ENCODE measurements at regions of chr21 and their contacts with region 1.

Region 1: GRCh38 chr21:15729674-15730483 is at the start of gene USP25:
- DNase-seq: peak; percentile 80
- H3K4me3 Mint-ChIP-seq: peak within 1 kb of the TSS; percentile 93
- H3K27ac Mint-ChIP-seq: peak within 1 kb of the TSS; percentile 91
- H3K4me1 Mint-ChIP-seq: peaks cover 40% of the 10 kb centered on the region
- H3K27me3 Mint-ChIP-seq: peaks cover 31% of the 10 kb centered on the region
- total RNA-seq, gene USP25: 25.6 and 26.8 TPM in 2 replicates

Region 2: GRCh38 chr21:14454016-14455009 is 1275.6 kb before region 1 on chr21:
- intact Hi-C with region 1: loop called (anchors 5 kb)
- DNase-seq: no peak
- H3K4me3 Mint-ChIP-seq: peak overlapping the region; percentile 62
- H3K27ac Mint-ChIP-seq: peak overlapping the region; percentile 92
- H3K4me1 Mint-ChIP-seq: peaks cover 74% of the 10 kb centered on the region
- H3K27me3 Mint-ChIP-seq: no peaks in the 10 kb centered on the region

Region 3: DNA sequence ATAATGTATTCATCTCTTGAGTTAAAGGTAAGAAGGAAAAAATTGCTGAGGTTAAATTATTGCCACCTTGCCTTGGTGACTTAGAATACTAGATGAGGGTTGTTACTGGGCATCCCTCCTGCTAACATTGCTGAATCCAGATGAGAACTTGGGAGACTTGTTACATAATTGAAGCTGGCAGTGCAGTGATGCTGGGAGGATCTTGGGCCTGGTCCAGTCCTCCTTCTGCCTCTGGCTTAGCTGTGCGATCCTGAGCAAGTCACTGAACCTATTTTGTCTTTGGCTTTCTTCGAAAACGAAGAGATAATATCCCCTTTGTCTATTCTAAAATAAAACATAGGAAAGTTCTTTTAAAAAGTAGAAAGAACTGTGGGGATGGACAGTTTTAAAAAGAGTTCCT is 420.2 kb before region 1 on chr21:
- intact Hi-C with region 1: no loop called
- DNase-seq: no peak
- H3K4me3 Mint-ChIP-seq: no peak overlapping the region
- H3K27ac Mint-ChIP-seq: no peak overlapping the region
- H3K4me1 Mint-ChIP-seq: no peaks in the 10 kb centered on the region
- H3K27me3 Mint-ChIP-seq: no peaks in the 10 kb centered on the region

Region 4: GRCh38 chr21:15514073-15514946 is 215.6 kb before region 1 on chr21:
- intact Hi-C with region 1: loop called (anchors 5 kb)
- DNase-seq: peak; percentile 57
- H3K4me3 Mint-ChIP-seq: peak overlapping the region; percentile 21
- H3K27ac Mint-ChIP-seq: peak overlapping the region; percentile 69
- H3K4me1 Mint-ChIP-seq: peaks cover 21% of the 10 kb centered on the region
- H3K27me3 Mint-ChIP-seq: no peaks in the 10 kb centered on the region

Region 5: DNA sequence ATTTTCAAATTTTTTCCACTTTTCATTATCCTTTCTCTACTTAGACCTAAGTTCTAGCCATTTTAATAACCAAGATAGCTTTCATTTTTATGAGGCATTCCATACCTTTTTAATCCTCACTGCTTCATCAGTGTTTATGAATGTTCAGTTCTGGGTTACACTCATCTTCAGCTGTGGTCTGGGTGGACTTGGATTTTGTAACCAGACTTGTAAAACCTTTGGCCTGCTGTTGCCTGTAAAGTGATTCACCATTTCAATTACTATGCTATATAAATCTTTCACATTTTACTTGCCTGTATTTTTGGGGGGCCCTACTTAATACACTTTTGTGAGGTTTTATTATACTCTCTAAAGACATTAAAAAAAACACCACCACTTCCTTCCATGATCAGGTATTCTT is 46.1 kb after region 1 on chr21:
- intact Hi-C with region 1: loop called (anchors 5 kb)
- DNase-seq: no peak
- H3K4me3 Mint-ChIP-seq: no peak overlapping the region
- H3K27ac Mint-ChIP-seq: no peak overlapping the region
- H3K4me1 Mint-ChIP-seq: peaks cover 19% of the 10 kb centered on the region
- H3K27me3 Mint-ChIP-seq: no peaks in the 10 kb centered on the region

Region 6: DNA sequence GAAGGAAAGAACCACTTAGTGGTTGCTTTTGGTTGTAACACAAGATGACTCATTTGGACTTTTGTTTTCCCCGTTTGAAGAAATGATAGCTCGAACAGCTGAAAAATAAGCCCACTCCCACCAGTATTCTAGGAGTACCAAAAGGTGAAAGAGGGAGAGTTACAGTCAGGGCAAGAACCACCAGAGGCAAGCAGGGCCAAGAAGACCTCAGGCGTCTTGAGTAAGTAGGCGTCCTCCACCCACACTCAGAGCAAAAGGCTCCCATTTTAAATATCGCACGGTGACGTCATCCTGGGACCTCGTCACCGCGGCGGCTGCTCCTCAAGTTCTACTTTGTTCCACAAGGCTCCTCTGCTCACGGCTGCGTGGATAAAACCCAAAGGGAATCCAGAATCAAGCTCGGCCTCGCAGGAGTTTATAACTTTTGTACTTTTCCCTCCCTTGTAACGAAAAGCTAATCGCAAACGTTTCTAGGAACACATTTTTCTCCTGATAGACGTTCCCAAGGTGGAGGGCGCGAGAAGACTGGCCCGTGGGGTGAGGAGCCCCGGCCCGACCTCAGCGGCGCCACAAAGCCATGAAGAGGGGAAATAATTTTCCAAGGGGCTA is 1881.6 kb after region 1 on chr21:
- intact Hi-C with region 1: loop called (anchors 5 kb)
- DNase-seq: peak; percentile 76
- H3K4me3 Mint-ChIP-seq: peak overlapping the region; percentile 88
- H3K27ac Mint-ChIP-seq: peak overlapping the region; percentile 97
- H3K4me1 Mint-ChIP-seq: peaks cover 58% of the 10 kb centered on the region
- H3K27me3 Mint-ChIP-seq: no peaks in the 10 kb centered on the region